Heart left ventricle (tissue), 16 donors: ENCODE measurements at regions of chrX and their contacts with region 1.

Region 1: DNA sequence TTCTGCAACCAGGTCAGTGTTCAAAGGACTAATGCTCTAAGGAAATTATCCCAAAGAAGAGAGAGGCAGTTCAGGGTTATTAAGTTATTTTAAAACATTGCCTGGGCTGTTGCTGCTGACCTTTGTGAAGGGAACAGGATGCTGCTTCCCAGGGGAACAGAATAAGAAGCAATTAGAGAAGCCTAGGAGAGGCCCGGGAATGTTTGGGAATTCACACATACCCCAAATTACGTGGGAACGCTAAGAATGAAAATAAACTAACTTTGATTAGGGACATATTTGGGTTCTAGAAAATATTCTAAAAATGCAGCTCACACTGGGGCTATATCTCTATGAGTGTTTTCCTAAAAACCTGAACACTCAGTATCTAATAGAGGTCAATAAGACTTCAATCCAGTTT is 243.1 kb upstream of the FTHL17 start:
- DNase-seq: peak in 3 of 5 donors; percentile 17 to 22 (median 18)
- ATAC-seq: peak; percentile 45 to 90 (median 70)
- H3K4me3 ChIP-seq: no peak overlapping the region
- H3K27ac ChIP-seq: peak overlapping the region in 8 of 12 donors; percentile 23 to 68 (median 45)
- H3K4me1 ChIP-seq: peaks cover 0 to 40% (median 0%) of the 10 kb centered on the region in 12 donors
- H3K27me3 ChIP-seq: no peaks in the 10 kb centered on the region
- CTCF ChIP-seq: no peak
- POLR2A ChIP-seq: no peak

Region 2: DNA sequence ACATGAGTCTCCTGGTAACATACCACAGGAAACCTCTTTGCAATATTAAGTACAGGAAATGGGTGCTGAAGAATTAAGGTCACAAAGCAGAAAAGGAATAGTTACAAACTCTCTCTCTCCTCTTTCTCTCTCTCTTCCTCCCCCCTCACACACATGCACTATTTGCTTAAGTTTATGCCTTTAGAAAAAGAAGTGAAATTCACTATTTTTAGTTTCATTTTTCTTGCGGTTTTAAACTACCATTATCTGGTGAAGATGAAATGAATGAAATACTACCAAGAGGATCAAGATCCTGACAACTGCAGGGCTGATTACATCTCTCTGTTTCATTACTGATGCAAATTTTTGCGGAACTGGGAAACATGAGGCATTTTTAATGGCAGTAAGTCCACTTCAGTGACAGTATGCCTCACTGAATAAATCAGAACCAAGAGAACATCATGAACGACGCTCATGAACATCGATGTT is 178.7 kb before region 1 on chrX:
- intact Hi-C with region 1: no loop called
- DNase-seq: no peak
- ATAC-seq: no peak
- H3K4me3 ChIP-seq: no peak overlapping the region
- H3K27ac ChIP-seq: no peak overlapping the region
- H3K4me1 ChIP-seq: peaks cover 0 to 3% (median 0%) of the 10 kb centered on the region in 12 donors
- H3K27me3 ChIP-seq: no peaks in the 10 kb centered on the region
- CTCF ChIP-seq: no peak
- POLR2A ChIP-seq: no peak

Region 3: DNA sequence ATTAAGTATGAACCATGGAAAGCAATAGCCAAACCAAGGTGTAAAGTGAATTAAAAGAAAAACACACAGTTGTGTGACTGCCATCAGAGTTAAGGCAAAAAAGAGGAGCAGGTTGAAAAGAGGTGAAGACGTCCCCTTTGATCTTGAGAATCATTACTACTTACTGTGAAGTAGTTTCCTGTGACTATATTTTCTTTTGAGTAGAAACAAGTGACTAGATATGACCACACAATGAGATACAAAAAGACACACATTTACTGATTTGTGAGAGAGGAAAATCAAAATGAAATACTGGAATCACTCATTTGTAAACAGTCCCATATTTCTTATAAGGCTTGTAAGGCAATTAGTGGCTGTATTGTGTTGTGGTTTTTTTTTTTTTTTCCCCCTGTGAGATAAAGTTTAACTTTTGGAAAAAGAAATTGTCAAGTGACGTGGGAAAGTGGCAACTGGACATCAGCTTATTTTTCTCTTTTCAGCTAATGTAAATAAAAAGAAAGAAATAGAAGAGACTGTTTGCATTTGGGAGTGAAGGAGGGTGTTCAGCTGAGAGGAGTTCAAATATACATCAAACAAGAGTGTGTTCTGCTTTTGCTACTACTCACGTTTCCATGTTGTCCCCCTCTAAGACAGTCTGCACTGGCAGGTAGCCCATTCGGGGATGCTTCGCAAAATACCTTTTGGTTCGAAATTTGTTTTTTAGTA is 136.7 kb before region 1 on chrX:
- intact Hi-C with region 1: no loop called
- DNase-seq: no peak
- ATAC-seq: no peak
- H3K4me3 ChIP-seq: no peak overlapping the region
- H3K27ac ChIP-seq: no peak overlapping the region
- H3K4me1 ChIP-seq: peaks cover 0 to 3% (median 0%) of the 10 kb centered on the region in 12 donors
- H3K27me3 ChIP-seq: peaks cover 0 to 3% (median 0%) of the 10 kb centered on the region in 9 donors
- CTCF ChIP-seq: no peak
- POLR2A ChIP-seq: no peak

Region 4: GRCh38 chrX:31271615-31272471 is 43.1 kb before region 1 on chrX:
- intact Hi-C with region 1: loop called in 2 of 10 experiments (anchors 5 to 10 kb)
- DNase-seq: no peak
- ATAC-seq: peak in 3 of 4 donors; percentile 63 to 76 (median 74)
- H3K4me3 ChIP-seq: no peak overlapping the region
- H3K27ac ChIP-seq: peak overlapping the region in 7 of 12 donors; percentile 24 to 66 (median 39)
- H3K4me1 ChIP-seq: peaks cover 0 to 18% (median 0%) of the 10 kb centered on the region in 12 donors
- H3K27me3 ChIP-seq: peaks cover 0 to 3% (median 0%) of the 10 kb centered on the region in 9 donors
- CTCF ChIP-seq: no peak
- POLR2A ChIP-seq: no peak

Region 5: GRCh38 chrX:31376408-31377022 is 61.6 kb after region 1 on chrX:
- intact Hi-C with region 1: no loop called
- DNase-seq: no peak
- ATAC-seq: peak in 3 of 4 donors; percentile 28 to 47 (median 41)
- H3K4me3 ChIP-seq: no peak overlapping the region
- H3K27ac ChIP-seq: no peak overlapping the region
- H3K4me1 ChIP-seq: peaks cover 0 to 9% (median 0%) of the 10 kb centered on the region in 12 donors
- H3K27me3 ChIP-seq: no peaks in the 10 kb centered on the region
- CTCF ChIP-seq: no peak
- POLR2A ChIP-seq: no peak

Region 6: DNA sequence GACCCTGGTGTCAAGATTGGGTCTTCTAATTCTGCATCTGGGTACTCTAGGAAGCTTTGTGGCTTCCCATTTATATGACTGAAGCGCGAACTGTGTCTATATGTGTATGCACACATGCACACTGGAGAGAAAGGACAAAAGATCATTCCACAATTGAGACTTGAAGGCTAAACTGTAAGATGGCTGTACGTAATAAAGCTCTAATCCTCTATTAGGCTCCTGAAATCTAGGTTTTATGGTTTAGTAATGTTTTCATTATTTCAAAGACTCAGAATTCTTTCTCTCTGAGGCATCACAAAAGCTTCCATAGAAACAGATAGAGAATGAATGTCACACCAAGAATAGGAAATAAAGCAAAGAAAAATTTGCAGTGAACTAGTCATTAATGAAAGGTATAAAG is 77.6 kb after region 1 on chrX:
- intact Hi-C with region 1: no loop called
- DNase-seq: no peak
- ATAC-seq: no peak
- H3K4me3 ChIP-seq: no peak overlapping the region
- H3K27ac ChIP-seq: no peak overlapping the region
- H3K4me1 ChIP-seq: no peaks in the 10 kb centered on the region
- H3K27me3 ChIP-seq: no peaks in the 10 kb centered on the region
- CTCF ChIP-seq: no peak
- POLR2A ChIP-seq: no peak